ENCODE measurements at regions of chr17 and their contacts with region 1.

Region 1: GRCh38 chr17:42683407-42684034 is 1.2 kb downstream of the CNTNAP1 start:
- DNase-seq: peak; percentile 58
- H3K4me3 ChIP-seq: peak overlapping the region in 3 of 4 donors; percentile 4 to 56 (median 45)
- H3K27ac ChIP-seq: peak overlapping the region; percentile 77 to 98 (median 90)
- H3K4me1 ChIP-seq: peaks cover 28 to 66% (median 53%) of the 10 kb centered on the region in 4 donors
- H3K27me3 ChIP-seq: peaks cover 43% of the 10 kb centered on the region
- CTCF ChIP-seq: no peak
- EP300 ChIP-seq: no peak
- POLR2A ChIP-seq: no peak

Region 2: GRCh38 chr17:42403150-42403549 is 280.4 kb before region 1 on chr17:
- in situ Hi-C with region 1: no loop called
- intact Hi-C with region 1: no loop called
- DNase-seq: peak; percentile 38
- H3K4me3 ChIP-seq: no peak overlapping the region
- H3K27ac ChIP-seq: peak overlapping the region; percentile 64 to 78 (median 74)
- H3K4me1 ChIP-seq: peaks cover 21 to 58% (median 51%) of the 10 kb centered on the region in 4 donors
- H3K27me3 ChIP-seq: no peaks in the 10 kb centered on the region
- CTCF ChIP-seq: peak in 2 of 5 experiments; percentile 11 to 19
- EP300 ChIP-seq: no peak
- POLR2A ChIP-seq: no peak

Region 3: GRCh38 chr17:42577532-42578281 is 105.8 kb before region 1 on chr17 and contains the start of gene PSMC3IP:
- in situ Hi-C with region 1: loop called in 3 of 4 experiments (anchors 25 kb)
- intact Hi-C with region 1: loop called (anchors 2 kb)
- DNase-seq: peak; percentile 97
- H3K4me3 ChIP-seq: peak within 1 kb of the TSS; percentile 27 to 71 (median 60)
- H3K27ac ChIP-seq: peak within 1 kb of the TSS; percentile 87 to 96 (median 91)
- H3K4me1 ChIP-seq: peaks cover 11 to 23% (median 14%) of the 10 kb centered on the region in 4 donors
- H3K27me3 ChIP-seq: no peaks in the 10 kb centered on the region
- CTCF ChIP-seq: peak in 4 of 5 experiments; percentile 28 to 61 (median 48)
- EP300 ChIP-seq: no peak
- POLR2A ChIP-seq: peak; percentile 82
- total RNA-seq, gene PSMC3IP: 0.96 to 2.6 (median 1.3) TPM in 3 of 4 donors, not detected in the other